Activated T-helper 1 cell treated with anti-CD3 and anti-CD28 coated beads, Interleukin-12 subunit alpha, Interleukin-12 subunit beta, Interleukin-2, Interleukin-4 antibody, amounts not matched to agents 30 ng/mL and 10 ng/mL and 1 ng/mL, durations not matched to agents 14 hours and 24 hours and 36 hours (primary cell): ENCODE measurements at regions of chr20 and their contacts with region 1.

Region 1: GRCh38 chr20:34704177-34705007 is at the start of gene TP53INP2:
- DNase-seq: peak; percentile 86
- H3K4me3 Mint-ChIP-seq: peak within 1 kb of the TSS; percentile 94
- H3K27ac Mint-ChIP-seq: peak within 1 kb of the TSS; percentile 89
- H3K4me1 Mint-ChIP-seq: peaks cover 52% of the 10 kb centered on the region
- H3K27me3 Mint-ChIP-seq: peaks cover 21% of the 10 kb centered on the region
- total RNA-seq, gene TP53INP2: 3.2 and 3.5 TPM in 2 replicates

Region 2: GRCh38 chr20:34302723-34303528 is 401.5 kb before region 1 on chr20 and contains the start of gene AHCY:
- intact Hi-C with region 1: loop called (anchors 1 kb)
- DNase-seq: peak; percentile 93
- H3K4me3 Mint-ChIP-seq: peak within 1 kb of the TSS; percentile 83
- H3K27ac Mint-ChIP-seq: peak within 1 kb of the TSS; percentile 92
- H3K4me1 Mint-ChIP-seq: peaks cover 19% of the 10 kb centered on the region
- H3K27me3 Mint-ChIP-seq: no peaks in the 10 kb centered on the region
- total RNA-seq, gene AHCY: 130 and 132 TPM in 2 replicates

Region 3: GRCh38 chr20:34516247-34517113 is 187.9 kb before region 1 on chr20 and contains the start of gene DYNLRB1:
- intact Hi-C with region 1: loop called (anchors 1 kb)
- DNase-seq: peak; percentile 93
- H3K4me3 Mint-ChIP-seq: peak within 1 kb of the TSS; percentile 95
- H3K27ac Mint-ChIP-seq: peak within 1 kb of the TSS; percentile 96
- H3K4me1 Mint-ChIP-seq: peaks cover 35% of the 10 kb centered on the region
- H3K27me3 Mint-ChIP-seq: no peaks in the 10 kb centered on the region
- total RNA-seq, gene DYNLRB1: 92.0 and 104 TPM in 2 replicates

Region 4: DNA sequence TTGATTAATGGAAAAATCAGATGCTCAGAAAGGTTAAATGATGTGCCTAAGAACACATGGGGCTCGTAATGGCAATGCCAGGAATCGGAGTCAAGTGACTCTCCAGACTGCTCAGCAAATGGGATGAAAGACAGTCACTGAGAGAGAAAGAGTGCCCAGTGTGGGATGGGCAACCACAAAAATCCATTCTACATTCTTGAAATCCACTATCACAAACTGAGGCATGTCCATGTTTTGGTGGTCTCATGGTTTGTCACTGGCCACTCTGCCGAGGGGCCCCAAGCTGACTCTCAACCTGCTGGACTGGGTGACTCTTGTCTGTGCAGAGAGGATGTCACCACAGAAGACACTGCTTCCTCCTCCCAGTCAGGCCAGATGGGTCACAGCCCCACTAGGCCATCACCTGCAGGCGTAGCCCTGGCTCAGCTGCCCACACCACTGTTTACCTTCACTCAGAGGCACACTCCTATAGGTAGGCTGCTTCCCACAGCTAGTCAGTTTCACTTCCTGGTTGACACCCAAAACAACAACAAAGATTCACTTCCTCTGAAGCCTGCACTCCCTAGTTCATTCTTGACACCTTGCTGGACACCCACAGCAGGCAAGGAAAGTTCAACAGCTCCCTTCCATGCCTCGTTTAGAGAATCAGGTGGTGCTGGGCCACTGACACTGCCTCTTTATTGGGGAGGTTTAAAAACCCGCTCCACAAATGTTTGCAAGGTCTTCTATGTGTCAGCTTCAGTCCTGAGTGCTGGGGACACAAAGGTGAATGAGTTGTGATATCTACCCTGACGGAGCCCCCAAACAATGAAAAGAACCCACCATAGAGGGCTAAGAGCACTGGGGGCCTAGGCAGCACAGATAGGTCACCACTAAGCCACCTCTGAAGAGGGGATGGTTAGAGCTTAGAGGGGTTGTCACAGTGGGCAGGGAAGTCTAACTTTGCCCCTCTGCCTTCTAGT is 124.1 kb before region 1 on chr20:
- intact Hi-C with region 1: loop called (anchors 2 kb)
- DNase-seq: peak; percentile 44
- H3K4me3 Mint-ChIP-seq: peak overlapping the region; percentile 46
- H3K27ac Mint-ChIP-seq: peak overlapping the region; percentile 54
- H3K4me1 Mint-ChIP-seq: peaks cover 39% of the 10 kb centered on the region
- H3K27me3 Mint-ChIP-seq: no peaks in the 10 kb centered on the region

Region 5: GRCh38 chr20:34768096-34768495 is 63.7 kb after region 1 on chr20:
- intact Hi-C with region 1: loop called (anchors 2 kb)
- DNase-seq: no peak
- H3K4me3 Mint-ChIP-seq: no peak overlapping the region
- H3K27ac Mint-ChIP-seq: no peak overlapping the region
- H3K4me1 Mint-ChIP-seq: no peaks in the 10 kb centered on the region
- H3K27me3 Mint-ChIP-seq: no peaks in the 10 kb centered on the region

Region 6: DNA sequence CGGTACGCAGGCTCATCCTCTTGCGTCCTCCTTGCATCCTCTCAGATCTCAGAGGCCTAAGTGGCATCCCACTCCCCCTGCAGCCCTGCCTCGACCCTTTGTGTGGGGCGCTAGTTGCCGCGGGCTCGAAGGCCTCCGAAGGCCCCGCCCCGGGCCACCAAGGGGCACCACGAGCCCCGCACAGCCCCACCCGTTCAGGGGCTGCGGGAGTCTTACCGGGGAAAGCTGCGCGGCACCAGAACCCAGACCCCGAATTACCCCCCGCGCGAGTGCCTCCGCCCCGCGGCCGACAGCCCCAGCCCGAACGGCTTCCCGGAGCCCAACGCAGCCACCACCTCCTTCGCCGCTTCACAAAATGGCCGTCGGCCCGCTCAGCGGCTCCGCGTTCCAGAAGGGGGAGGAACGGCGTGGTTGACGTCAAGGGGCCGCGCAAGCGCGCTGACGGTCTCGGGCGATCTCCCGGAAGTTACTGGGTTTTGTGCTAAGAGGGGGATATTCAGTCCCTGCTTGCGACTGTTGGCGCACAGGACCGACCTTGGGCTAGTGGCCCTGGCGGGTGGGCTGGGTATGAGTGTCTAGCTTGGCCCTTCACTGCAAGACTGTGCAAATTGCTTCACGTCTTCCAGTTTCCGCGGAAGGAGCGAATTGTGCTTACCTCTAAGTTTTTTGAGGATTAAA is 960.3 kb after region 1 on chr20 and contains the starts of genes CPNE1 and RBM12:
- intact Hi-C with region 1: loop called (anchors 1 kb)
- DNase-seq: peak; percentile 91
- H3K4me3 Mint-ChIP-seq: peak within 1 kb of the TSS; percentile 95
- H3K27ac Mint-ChIP-seq: peak within 1 kb of the TSS; percentile 99
- H3K4me1 Mint-ChIP-seq: peaks cover 48% of the 10 kb centered on the region
- H3K27me3 Mint-ChIP-seq: no peaks in the 10 kb centered on the region
- total RNA-seq, gene CPNE1: 304 and 308 TPM in 2 replicates
- total RNA-seq, gene RBM12: 151 and 168 TPM in 2 replicates